Activated CD8-positive, alpha-beta T cell treated with anti-CD3 and anti-CD28 coated beads for 36 hours (primary cell): ENCODE measurements at regions of chr12 and their contacts with region 1.

Region 1: DNA sequence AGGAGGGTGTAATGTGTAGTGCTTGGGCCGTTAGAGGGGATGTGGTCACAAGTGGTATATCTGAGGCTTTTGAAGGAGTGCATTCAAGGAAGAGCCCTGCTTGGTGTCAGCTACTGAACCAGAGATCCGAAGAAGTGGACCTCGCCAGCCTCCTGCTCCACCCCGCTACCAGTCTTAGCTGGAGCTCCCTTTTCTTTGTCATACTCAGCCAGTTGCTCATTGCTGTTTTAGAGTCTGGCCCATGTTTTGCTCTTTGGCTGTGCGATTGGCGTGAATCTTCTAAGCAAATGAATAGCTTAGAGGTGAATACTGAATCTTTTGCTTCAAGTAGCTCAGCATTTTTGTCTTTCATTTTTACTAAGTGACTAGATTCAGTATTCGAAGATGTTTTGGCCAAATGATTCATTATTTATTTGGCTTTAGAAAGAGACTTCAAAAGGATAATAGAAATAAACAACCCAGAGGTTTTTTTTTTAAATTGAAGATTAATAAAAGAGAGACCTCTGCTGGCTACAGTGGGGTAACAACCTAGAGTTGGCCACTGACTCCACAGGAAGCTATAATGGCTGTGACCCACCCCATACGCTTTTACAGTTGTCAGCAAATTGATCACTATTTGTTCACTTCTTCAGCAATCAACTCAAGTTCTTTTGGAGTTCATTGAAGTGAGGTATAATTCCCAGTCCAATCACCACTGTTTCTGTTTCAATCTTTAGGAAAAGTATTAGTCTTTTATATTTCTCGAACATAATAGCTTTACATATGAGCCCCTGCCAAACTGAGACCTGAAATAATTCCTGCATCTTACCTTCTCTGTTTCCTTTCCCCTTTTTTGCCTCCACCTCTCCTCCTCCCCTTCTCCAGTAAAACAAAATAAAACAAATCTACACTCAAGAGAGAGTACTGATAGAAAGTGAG is 19.9 kb downstream of the CDKN1B start:
- DNase-seq: peak; percentile 77
- ATAC-seq: peak; percentile 92
- H3K4me3 Mint-ChIP-seq: peak overlapping the region; percentile 70
- H3K27ac Mint-ChIP-seq: peak overlapping the region; percentile 89
- H3K4me1 Mint-ChIP-seq: peaks cover 42% of the 10 kb centered on the region
- H3K27me3 Mint-ChIP-seq: no peaks in the 10 kb centered on the region
- CTCF ChIP-seq: peak; percentile 79

Region 2: GRCh38 chr12:12376646-12377448 is 360.2 kb before region 1 on chr12:
- CTCF ChIA-PET with region 1: interaction called, 22 read pairs
- POLR2A ChIA-PET with region 1: no interaction called
- intact Hi-C with region 1: no loop called
- DNase-seq: peak; percentile 20
- ATAC-seq: peak; percentile 66
- H3K4me3 Mint-ChIP-seq: no peak overlapping the region
- H3K27ac Mint-ChIP-seq: peak overlapping the region; percentile 25
- H3K4me1 Mint-ChIP-seq: peaks cover 33% of the 10 kb centered on the region
- H3K27me3 Mint-ChIP-seq: no peaks in the 10 kb centered on the region
- CTCF ChIP-seq: peak; percentile 70

Region 3: GRCh38 chr12:12645485-12645884 is 91.5 kb before region 1 on chr12:
- CTCF ChIA-PET with region 1: interaction called, 26 read pairs
- POLR2A ChIA-PET with region 1: no interaction called
- intact Hi-C with region 1: loop called (anchors 10 kb)
- DNase-seq: peak; percentile 45
- ATAC-seq: peak; percentile 82
- H3K4me3 Mint-ChIP-seq: no peak overlapping the region
- H3K27ac Mint-ChIP-seq: peak overlapping the region; percentile 69
- H3K4me1 Mint-ChIP-seq: peaks cover 17% of the 10 kb centered on the region
- H3K27me3 Mint-ChIP-seq: no peaks in the 10 kb centered on the region
- CTCF ChIP-seq: peak; percentile 80

Region 4: DNA sequence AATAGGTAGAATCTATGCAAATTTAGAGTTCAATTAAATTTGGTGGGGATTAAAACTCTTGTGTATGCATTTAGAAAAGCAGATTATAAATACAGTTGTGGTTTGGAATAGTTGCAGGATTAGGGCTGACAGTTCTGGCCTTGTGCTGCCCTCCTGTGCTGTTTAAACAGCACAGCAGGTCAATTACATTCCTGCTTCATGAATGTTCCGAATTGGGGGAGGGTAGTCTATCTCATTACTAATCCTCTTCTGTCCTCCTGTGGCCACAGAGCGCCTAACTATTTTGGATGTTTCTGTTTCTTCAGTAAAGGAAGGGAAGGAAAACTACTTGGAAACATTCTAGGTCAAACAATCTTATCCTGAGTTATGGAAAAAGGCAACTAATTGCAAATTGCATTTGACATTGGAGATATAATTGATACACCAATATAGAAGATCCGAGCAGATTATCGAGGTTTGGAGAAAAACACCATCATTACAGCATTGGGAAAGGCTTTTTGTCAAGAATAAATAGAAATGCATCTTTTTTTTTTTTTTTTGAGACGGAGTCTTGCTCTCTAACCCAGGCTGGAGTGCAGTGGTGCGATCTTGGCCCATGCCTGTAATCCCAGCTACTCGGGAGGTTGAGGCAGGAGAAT is 32.3 kb before region 1 on chr12:
- CTCF ChIA-PET with region 1: interaction called, 25 read pairs
- POLR2A ChIA-PET with region 1: no interaction called
- intact Hi-C with region 1: no loop called
- DNase-seq: peak; percentile 47
- ATAC-seq: peak; percentile 79
- H3K4me3 Mint-ChIP-seq: no peak overlapping the region
- H3K27ac Mint-ChIP-seq: peak overlapping the region; percentile 18
- H3K4me1 Mint-ChIP-seq: peaks cover 22% of the 10 kb centered on the region
- H3K27me3 Mint-ChIP-seq: no peaks in the 10 kb centered on the region
- CTCF ChIP-seq: no peak

Region 5: DNA sequence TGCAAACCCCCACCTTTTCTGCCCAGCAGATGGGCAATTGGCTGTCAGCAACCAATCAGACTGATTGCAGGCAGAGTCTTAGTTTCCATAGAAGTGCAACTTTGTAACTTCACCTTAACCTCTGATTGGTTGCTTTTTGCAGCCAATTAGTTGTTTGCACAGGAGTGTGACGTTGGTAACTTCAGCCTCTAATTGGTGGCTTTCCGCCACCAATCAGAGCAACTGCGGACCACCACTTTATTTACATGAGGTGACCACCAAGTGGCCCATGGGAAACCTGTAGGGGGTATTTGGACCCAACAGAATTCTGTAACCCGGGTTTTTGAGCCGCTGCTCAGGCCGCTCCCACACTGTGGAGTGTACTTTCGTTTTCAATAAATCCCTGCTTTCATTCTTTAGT is 12.4 kb after region 1 on chr12:
- CTCF ChIA-PET with region 1: interaction called, 24 read pairs
- POLR2A ChIA-PET with region 1: interaction called, 4 read pairs
- intact Hi-C with region 1: no loop called
- DNase-seq: no peak
- ATAC-seq: no peak
- H3K4me3 Mint-ChIP-seq: no peak overlapping the region
- H3K27ac Mint-ChIP-seq: no peak overlapping the region
- H3K4me1 Mint-ChIP-seq: no peaks in the 10 kb centered on the region
- H3K27me3 Mint-ChIP-seq: no peaks in the 10 kb centered on the region
- CTCF ChIP-seq: no peak

Region 6: GRCh38 chr12:12803186-12803585 is 66.2 kb after region 1 on chr12:
- CTCF ChIA-PET with region 1: no interaction called
- POLR2A ChIA-PET with region 1: no interaction called
- intact Hi-C with region 1: no loop called
- DNase-seq: peak; percentile 62
- ATAC-seq: peak; percentile 68
- H3K4me3 Mint-ChIP-seq: no peak overlapping the region
- H3K27ac Mint-ChIP-seq: peak overlapping the region; percentile 69
- H3K4me1 Mint-ChIP-seq: peaks cover 50% of the 10 kb centered on the region
- H3K27me3 Mint-ChIP-seq: no peaks in the 10 kb centered on the region
- CTCF ChIP-seq: no peak